ENCODE measurements at regions of chr3 and their contacts with region 1.

Region 1: DNA sequence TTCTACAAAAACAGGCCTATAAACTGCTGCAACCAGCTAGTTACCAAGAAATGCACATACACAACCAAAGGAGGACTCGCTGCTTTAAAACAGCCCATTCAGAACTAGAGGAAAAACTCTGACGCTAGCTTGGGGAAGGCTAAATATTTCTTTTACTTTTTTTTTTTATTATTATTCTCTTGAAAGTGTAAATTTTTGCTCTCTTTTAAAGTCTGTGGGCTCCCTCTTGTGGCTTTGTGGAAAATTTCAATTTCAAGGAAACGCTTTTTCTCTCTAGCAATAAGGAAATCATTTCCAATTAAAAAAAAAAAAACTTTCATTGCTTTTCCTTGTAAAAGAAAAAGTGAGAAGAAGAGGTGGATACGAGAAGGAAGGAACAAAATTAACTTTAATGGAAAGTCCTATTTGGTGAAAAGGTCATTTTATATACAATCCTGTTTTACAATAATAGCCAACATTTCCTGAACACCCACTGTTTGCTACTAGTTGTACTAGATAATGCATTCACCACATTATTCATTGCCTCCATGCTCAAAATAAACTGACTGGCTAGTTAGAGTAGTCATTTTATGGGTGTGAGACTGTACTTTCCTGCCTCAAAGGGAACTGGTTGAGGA is 51.2 kb upstream of the SAMMSON start:
- DNase-seq: peak; percentile 66
- ATAC-seq: peak; percentile 59
- H3K4me3 ChIP-seq: no peak overlapping the region
- H3K27ac ChIP-seq: peak overlapping the region; percentile 62
- H3K4me1 ChIP-seq: peaks cover 4% of the 10 kb centered on the region
- H3K27me3 ChIP-seq: no peaks in the 10 kb centered on the region
- CTCF ChIP-seq: peak; percentile 75
- POLR2A ChIP-seq: no peak
- RAD21 ChIP-seq: peak; percentile 77

Region 2: GRCh38 chr3:69084326-69085167 is 863.8 kb before region 1 on chr3 and contains the start of gene ARL6IP5:
- CTCF ChIA-PET with region 1: no interaction called
- POLR2A ChIA-PET with region 1: no interaction called
- dilution Hi-C with region 1: no loop called
- in situ Hi-C with region 1: no loop called
- intact Hi-C with region 1: loop called (anchors 10 kb)
- DNase-seq: peak; percentile 93
- ATAC-seq: peak; percentile 44
- H3K4me3 ChIP-seq: peak within 1 kb of the TSS; percentile 87
- H3K27ac ChIP-seq: peak within 1 kb of the TSS; percentile 86
- H3K4me1 ChIP-seq: peaks cover 10% of the 10 kb centered on the region
- H3K27me3 ChIP-seq: no peaks in the 10 kb centered on the region
- CTCF ChIP-seq: no peak
- POLR2A ChIP-seq: no peak
- RAD21 ChIP-seq: no peak
- total RNA-seq, gene ARL6IP5: 98.8 and 126 TPM in 2 replicates

Region 3: DNA sequence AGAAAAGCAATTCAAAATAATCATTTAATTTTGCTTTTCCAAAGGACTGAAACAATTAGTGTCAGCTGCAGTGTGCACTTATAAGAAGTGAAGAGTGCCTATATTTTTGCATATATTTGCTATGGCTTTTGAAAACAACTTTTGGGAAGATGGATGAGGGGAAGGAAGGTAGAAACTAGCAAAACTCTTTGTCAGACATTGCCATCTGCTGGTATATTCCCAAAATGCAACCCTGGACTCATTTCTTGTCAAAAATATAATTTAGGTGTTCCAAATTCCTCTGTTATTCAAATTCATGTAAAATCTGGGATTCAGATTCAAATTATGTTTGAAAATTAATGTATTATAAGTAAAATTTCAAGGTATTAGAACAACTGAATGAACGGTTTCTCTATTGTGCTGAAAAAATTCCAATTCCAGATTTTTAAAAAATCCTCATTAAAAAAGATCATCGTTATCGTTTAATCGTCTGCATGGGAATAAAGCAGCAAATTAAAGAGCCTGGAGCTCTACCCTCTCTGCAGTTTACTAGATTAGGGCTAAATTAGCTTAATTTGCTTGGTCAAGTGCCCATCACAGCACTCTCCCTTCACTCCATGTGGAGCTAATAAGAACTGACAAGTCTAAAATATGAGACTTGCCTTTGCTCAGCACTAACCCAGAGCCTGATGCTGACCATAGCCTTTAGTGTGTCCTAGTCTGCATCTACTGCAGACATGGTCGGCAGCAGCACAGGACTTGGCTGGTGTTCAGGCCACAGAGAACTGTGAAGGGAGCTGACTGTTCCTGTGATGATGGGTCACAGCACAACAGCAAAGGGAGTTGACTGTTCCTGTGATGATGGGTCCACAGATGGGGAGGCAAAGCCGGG is 277.0 kb before region 1 on chr3:
- CTCF ChIA-PET with region 1: interaction called, 4 read pairs
- POLR2A ChIA-PET with region 1: no interaction called
- dilution Hi-C with region 1: loop called (anchors 25 kb)
- in situ Hi-C with region 1: no loop called
- intact Hi-C with region 1: loop called (anchors 5 kb)
- DNase-seq: peak; percentile 42
- ATAC-seq: peak; percentile 75
- H3K4me3 ChIP-seq: no peak overlapping the region
- H3K27ac ChIP-seq: no peak overlapping the region
- H3K4me1 ChIP-seq: no peaks in the 10 kb centered on the region
- H3K27me3 ChIP-seq: peaks cover 2% of the 10 kb centered on the region; the same call in 1 of the 2 replicates
- CTCF ChIP-seq: peak; percentile 77
- POLR2A ChIP-seq: no peak
- RAD21 ChIP-seq: peak; percentile 77

Region 4: DNA sequence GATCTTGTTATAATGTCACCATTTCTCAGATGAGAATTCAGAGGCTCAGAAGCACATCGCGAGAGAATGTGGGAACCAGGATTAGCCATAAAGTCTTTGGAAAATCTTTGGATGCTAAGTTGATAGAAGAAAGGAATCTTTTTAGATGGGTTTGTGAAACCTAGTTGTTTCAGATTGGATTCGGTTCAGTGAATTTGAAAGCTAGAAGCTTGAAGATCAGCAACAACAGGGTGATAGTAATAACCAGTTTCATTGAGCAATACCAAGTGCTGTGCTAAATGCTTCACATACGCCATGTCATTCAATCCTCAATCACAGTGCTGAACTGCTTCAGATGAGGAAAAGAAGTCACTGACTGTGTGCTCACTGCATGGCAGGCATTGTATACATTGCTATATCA is 256.5 kb before region 1 on chr3:
- CTCF ChIA-PET with region 1: interaction called, 7 read pairs
- POLR2A ChIA-PET with region 1: no interaction called
- dilution Hi-C with region 1: loop called (anchors 25 kb)
- in situ Hi-C with region 1: loop called (anchors 5 kb)
- intact Hi-C with region 1: loop called (anchors 1 kb)
- DNase-seq: no peak
- ATAC-seq: no peak
- H3K4me3 ChIP-seq: no peak overlapping the region
- H3K27ac ChIP-seq: no peak overlapping the region
- H3K4me1 ChIP-seq: peaks cover 4% of the 10 kb centered on the region
- H3K27me3 ChIP-seq: peaks cover 3% of the 10 kb centered on the region
- CTCF ChIP-seq: no peak
- POLR2A ChIP-seq: no peak
- RAD21 ChIP-seq: no peak

Region 5: DNA sequence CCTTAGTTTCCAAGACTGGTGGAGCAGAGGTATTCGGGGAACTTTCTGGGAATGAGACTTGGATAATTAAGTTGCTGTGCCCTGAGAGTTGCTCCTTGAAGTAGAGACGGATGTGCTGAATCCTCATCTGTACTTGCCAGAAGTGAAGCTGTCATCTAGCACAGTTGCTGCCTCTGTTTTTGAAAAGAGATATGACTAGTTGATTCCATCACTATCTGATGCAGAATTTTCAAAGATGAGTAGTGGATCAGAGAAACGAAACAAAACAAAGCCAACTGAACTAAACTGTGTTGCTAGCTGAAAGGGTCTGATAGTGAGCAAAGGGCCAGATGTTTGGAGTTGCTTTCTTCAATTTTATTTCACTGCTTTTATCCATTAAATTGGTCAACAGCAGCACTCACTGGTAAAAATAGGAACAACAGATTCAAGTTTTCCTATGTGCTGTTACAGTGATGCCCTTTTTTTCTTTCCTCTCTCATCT is 156.4 kb before region 1 on chr3:
- CTCF ChIA-PET with region 1: interaction called, 5 read pairs
- POLR2A ChIA-PET with region 1: no interaction called
- dilution Hi-C with region 1: no loop called
- in situ Hi-C with region 1: no loop called
- intact Hi-C with region 1: loop called (anchors 1 kb)
- DNase-seq: peak; percentile 72
- ATAC-seq: peak; percentile 70
- H3K4me3 ChIP-seq: no peak overlapping the region
- H3K27ac ChIP-seq: peak overlapping the region; percentile 83; the same call in 1 of the 2 replicates
- H3K4me1 ChIP-seq: peaks cover 15% of the 10 kb centered on the region
- H3K27me3 ChIP-seq: no peaks in the 10 kb centered on the region
- CTCF ChIP-seq: peak; percentile 71
- POLR2A ChIP-seq: no peak
- RAD21 ChIP-seq: peak; percentile 83

Region 6: GRCh38 chr3:69806735-69807438 is 141.5 kb before region 1 on chr3:
- CTCF ChIA-PET with region 1: no interaction called
- POLR2A ChIA-PET with region 1: no interaction called
- dilution Hi-C with region 1: no loop called
- in situ Hi-C with region 1: loop called (anchors 10 kb)
- intact Hi-C with region 1: no loop called
- DNase-seq: peak; percentile 85
- ATAC-seq: peak; percentile 80
- H3K4me3 ChIP-seq: no peak overlapping the region
- H3K27ac ChIP-seq: peak overlapping the region; percentile 77
- H3K4me1 ChIP-seq: peaks cover 18% of the 10 kb centered on the region
- H3K27me3 ChIP-seq: no peaks in the 10 kb centered on the region
- CTCF ChIP-seq: no peak
- POLR2A ChIP-seq: no peak
- RAD21 ChIP-seq: no peak

Region 7: DNA sequence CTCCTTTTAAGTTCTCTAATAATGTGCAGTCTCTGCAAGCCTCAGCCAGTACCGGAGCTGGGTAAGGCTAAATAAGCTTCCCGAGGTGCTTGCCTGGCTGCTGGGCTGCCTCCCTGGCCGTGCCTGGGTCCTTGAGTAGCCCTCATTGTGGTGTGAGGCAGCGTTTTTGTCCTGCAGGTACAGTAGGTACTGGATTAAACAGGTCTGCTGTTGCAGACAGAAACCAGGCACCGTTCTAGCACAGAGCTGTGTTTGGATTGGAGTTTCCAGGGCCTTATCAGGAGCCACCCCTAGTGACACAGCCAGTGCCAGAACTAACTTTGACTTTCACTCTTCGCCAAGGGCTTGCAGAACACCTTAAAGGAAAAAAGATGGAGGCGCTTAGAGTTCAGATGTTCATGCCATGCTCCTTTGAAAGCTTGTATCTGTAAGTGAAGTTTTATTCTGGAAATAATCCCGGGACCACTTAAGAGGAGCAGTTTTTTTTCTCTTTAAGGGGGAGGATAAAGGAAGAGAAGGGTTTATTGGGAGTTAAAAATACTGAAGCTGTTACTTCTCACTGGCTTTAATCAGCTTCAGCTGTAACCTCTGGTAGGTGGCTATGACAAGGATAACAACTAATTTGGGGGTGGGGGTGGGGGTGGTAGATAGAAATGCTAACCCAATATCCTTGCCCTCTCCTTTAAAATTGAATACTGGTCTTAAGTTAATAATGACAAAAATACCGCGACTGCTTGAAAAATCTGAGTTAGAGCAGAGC is 82.3 kb before region 1 on chr3:
- CTCF ChIA-PET with region 1: no interaction called
- POLR2A ChIA-PET with region 1: no interaction called
- dilution Hi-C with region 1: no loop called
- in situ Hi-C with region 1: no loop called
- intact Hi-C with region 1: loop called (anchors 5 kb)
- DNase-seq: peak; percentile 23
- ATAC-seq: peak; percentile 5
- H3K4me3 ChIP-seq: peak overlapping the region; percentile 20; the same call in 1 of the 2 replicates
- H3K27ac ChIP-seq: peak overlapping the region; percentile 97
- H3K4me1 ChIP-seq: peaks cover 36% of the 10 kb centered on the region
- H3K27me3 ChIP-seq: no peaks in the 10 kb centered on the region
- CTCF ChIP-seq: no peak
- POLR2A ChIP-seq: no peak
- RAD21 ChIP-seq: no peak

Region 8: DNA sequence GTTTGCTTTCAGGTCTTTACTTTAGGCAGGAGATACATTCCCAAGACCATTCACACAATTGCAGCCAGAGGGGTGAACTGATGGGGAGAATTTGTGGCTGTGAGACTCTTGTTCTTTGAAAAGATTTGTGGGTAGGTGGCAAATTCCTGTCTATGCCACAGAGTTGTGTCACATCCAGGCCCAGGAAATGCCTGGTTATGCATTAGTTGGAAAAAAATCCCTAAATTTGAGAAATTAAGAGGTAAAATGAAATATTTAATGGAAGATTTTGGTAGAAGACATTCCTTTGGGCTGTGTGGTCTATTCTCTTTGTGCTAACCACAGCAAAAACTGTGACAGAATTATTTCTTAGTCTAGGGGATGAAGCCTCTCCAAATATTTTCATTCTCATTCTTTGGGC is 80.0 kb after region 1 on chr3:
- CTCF ChIA-PET with region 1: no interaction called
- POLR2A ChIA-PET with region 1: no interaction called
- dilution Hi-C with region 1: no loop called
- in situ Hi-C with region 1: no loop called
- intact Hi-C with region 1: no loop called
- DNase-seq: no peak
- ATAC-seq: no peak
- H3K4me3 ChIP-seq: no peak overlapping the region
- H3K27ac ChIP-seq: no peak overlapping the region
- H3K4me1 ChIP-seq: no peaks in the 10 kb centered on the region
- H3K27me3 ChIP-seq: peaks cover 8% of the 10 kb centered on the region
- CTCF ChIP-seq: no peak
- POLR2A ChIP-seq: no peak
- RAD21 ChIP-seq: no peak

Measured in IMR-90 (cell line).